Activated T-helper 1 cell treated with anti-CD3 and anti-CD28 coated beads, Interleukin-12 subunit alpha, Interleukin-12 subunit beta, Interleukin-2, Interleukin-4 antibody, amounts not matched to agents 30 ng/mL and 10 ng/mL and 1 ng/mL, durations not matched to agents 14 hours and 24 hours and 36 hours (primary cell): ENCODE measurements at regions of chr19 and their contacts with region 1.

Region 1: GRCh38 chr19:3434712-3435553 is 45.4 kb downstream of the SMIM24 start:
- DNase-seq: peak; percentile 95
- H3K4me3 Mint-ChIP-seq: peak overlapping the region; percentile 95
- H3K27ac Mint-ChIP-seq: peak overlapping the region; percentile 97
- H3K4me1 Mint-ChIP-seq: peaks cover 6% of the 10 kb centered on the region
- H3K27me3 Mint-ChIP-seq: peaks cover 5% of the 10 kb centered on the region

Region 2: GRCh38 chr19:3185482-3186376 is 249.2 kb before region 1 on chr19 and contains the start of gene NCLN:
- intact Hi-C with region 1: loop called (anchors 1 kb)
- DNase-seq: peak; percentile 91
- H3K4me3 Mint-ChIP-seq: peak within 1 kb of the TSS; percentile 93
- H3K27ac Mint-ChIP-seq: peak within 1 kb of the TSS; percentile 90
- H3K4me1 Mint-ChIP-seq: peaks cover 45% of the 10 kb centered on the region
- H3K27me3 Mint-ChIP-seq: no peaks in the 10 kb centered on the region
- total RNA-seq, gene NCLN: 112 and 118 TPM in 2 replicates

Region 3: GRCh38 chr19:3275583-3276340 is 159.2 kb before region 1 on chr19:
- intact Hi-C with region 1: loop called (anchors 1 kb)
- DNase-seq: peak; percentile 76
- H3K4me3 Mint-ChIP-seq: peak overlapping the region; percentile 78
- H3K27ac Mint-ChIP-seq: peak overlapping the region; percentile 75
- H3K4me1 Mint-ChIP-seq: peaks cover 8% of the 10 kb centered on the region
- H3K27me3 Mint-ChIP-seq: peaks cover 11% of the 10 kb centered on the region

Region 4: GRCh38 chr19:3360421-3361383 is 74.2 kb before region 1 on chr19:
- intact Hi-C with region 1: loop called (anchors 2 kb)
- DNase-seq: peak; percentile 64
- H3K4me3 Mint-ChIP-seq: peak overlapping the region; percentile 87
- H3K27ac Mint-ChIP-seq: peak overlapping the region; percentile 86
- H3K4me1 Mint-ChIP-seq: peaks cover 32% of the 10 kb centered on the region
- H3K27me3 Mint-ChIP-seq: peaks cover 48% of the 10 kb centered on the region

Region 5: GRCh38 chr19:3500429-3501130 is 65.6 kb after region 1 on chr19 and contains the start of gene DOHH:
- intact Hi-C with region 1: loop called (anchors 2 kb)
- DNase-seq: peak; percentile 92
- H3K4me3 Mint-ChIP-seq: peak within 1 kb of the TSS; percentile 91
- H3K27ac Mint-ChIP-seq: peak within 1 kb of the TSS; percentile 97
- H3K4me1 Mint-ChIP-seq: peaks cover 35% of the 10 kb centered on the region
- H3K27me3 Mint-ChIP-seq: peaks cover 2% of the 10 kb centered on the region
- total RNA-seq, gene DOHH: 20.6 and 21.6 TPM in 2 replicates